ENCODE measurements at regions of chr18 and their contacts with region 1.

Region 1: GRCh38 chr18:48842259-48843061 is 108.3 kb downstream of the SMAD7 start:
- DNase-seq: peak in 4 of 5 donors; percentile 50 to 66 (median 59)
- ATAC-seq: peak; percentile 43 to 80 (median 62)
- H3K4me3 ChIP-seq: no peak overlapping the region
- H3K27ac ChIP-seq: peak overlapping the region; percentile 49 to 98 (median 84)
- H3K4me1 ChIP-seq: peaks cover 6 to 73% (median 53%) of the 10 kb centered on the region in 12 donors
- H3K27me3 ChIP-seq: no peaks in the 10 kb centered on the region
- CTCF ChIP-seq: no peak
- POLR2A ChIP-seq: no peak

Region 2: DNA sequence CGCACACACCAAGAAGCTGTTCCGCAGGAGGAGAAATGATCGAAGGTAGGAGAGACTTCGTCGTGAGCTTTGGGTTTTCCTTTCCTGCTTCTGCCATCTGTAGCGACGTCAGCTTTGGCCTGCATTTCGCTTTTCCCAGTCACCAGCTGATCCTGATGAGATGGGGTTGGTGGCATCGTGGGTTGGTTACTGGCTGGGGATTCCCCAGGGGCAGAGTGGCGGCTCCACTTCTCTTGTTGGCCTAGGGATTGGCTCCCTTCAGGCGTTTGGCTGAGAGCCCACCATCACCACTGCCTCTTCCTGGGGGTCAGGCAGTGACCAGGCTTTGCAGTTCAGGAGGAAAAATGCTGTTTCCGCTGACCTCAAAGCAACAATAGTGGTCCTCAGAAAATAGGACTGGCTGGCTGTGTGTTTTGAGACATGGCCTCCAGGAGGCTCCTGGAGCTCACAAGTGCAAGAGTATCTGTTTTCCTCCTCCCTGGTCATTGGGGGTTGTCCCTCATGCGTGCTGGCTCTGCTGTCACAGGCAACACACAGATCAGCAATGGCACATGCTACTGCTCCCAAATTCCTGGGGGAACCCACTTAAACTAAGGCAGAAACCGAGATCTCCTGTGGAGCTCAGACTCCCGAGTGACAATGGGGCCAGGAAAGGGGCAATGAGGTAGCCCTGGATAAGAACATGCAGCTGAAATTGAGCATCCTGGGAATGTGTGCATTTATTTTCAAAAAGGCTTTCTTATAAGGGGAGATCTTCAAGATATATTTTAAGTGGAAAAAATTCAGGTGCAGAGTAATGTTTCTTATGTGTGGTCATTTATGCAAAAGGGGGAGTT is 130.6 kb before region 1 on chr18:
- intact Hi-C with region 1: loop called in 1 of 10 experiments (anchors 10 kb)
- DNase-seq: peak; percentile 44 to 67 (median 59)
- ATAC-seq: peak in 3 of 4 donors; percentile 53 to 61 (median 60)
- H3K4me3 ChIP-seq: no peak overlapping the region
- H3K27ac ChIP-seq: peak overlapping the region in 7 of 12 donors; percentile 16 to 93 (median 64)
- H3K4me1 ChIP-seq: peaks cover 2 to 86% (median 49%) of the 10 kb centered on the region in 12 donors
- H3K27me3 ChIP-seq: no peaks in the 10 kb centered on the region
- CTCF ChIP-seq: peak; percentile 30 to 75 (median 60)
- POLR2A ChIP-seq: no peak

Region 3: GRCh38 chr18:48727681-48728080 is 114.8 kb before region 1 on chr18:
- intact Hi-C with region 1: no loop called
- DNase-seq: no peak
- ATAC-seq: peak; percentile 15 to 75 (median 56)
- H3K4me3 ChIP-seq: no peak overlapping the region
- H3K27ac ChIP-seq: peak overlapping the region in 8 of 12 donors; percentile 13 to 79 (median 47)
- H3K4me1 ChIP-seq: peaks cover 0 to 28% (median 15%) of the 10 kb centered on the region in 12 donors
- H3K27me3 ChIP-seq: no peaks in the 10 kb centered on the region
- CTCF ChIP-seq: no peak
- POLR2A ChIP-seq: no peak

Region 4: DNA sequence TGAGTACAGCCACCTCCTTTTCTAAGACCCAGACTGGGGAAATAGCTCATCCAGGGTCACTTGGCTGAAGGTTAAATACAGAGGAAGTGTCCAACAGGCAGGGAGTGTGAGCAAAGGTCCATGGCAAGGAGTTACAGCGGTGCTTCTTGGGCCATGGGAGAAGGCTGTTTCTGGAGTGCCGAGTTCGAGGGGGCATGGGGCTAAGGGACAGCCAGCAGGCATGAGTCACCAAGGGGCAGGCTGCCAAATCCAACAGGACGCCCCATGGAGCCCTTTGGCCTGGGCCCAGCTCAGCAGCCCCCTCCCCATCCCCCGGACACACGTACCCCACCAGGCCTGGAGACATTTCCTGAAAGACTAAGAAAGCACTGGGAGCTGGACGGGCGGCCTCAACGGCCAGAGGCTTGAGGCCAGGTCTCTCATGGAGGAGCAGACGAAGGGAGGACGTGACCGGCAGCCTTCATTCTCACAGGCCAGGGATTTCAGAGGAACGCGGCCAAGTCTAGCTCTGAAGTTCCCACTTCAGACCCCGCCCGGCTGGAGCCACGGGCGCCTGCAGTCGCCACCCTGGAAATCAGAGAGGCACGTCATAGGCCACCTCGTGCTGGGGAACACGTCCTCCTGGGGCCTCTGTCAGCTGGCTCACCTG is 52.1 kb before region 1 on chr18:
- intact Hi-C with region 1: loop called in 3 of 10 experiments (anchors 1 to 10 kb)
- DNase-seq: peak; percentile 89 to 94 (median 91)
- ATAC-seq: peak; percentile 81 to 85 (median 82)
- H3K4me3 ChIP-seq: no peak overlapping the region
- H3K27ac ChIP-seq: peak overlapping the region; percentile 75 to 96 (median 86)
- H3K4me1 ChIP-seq: peaks cover 5 to 78% (median 53%) of the 10 kb centered on the region in 12 donors
- H3K27me3 ChIP-seq: no peaks in the 10 kb centered on the region
- CTCF ChIP-seq: no peak
- POLR2A ChIP-seq: no peak

Region 5: GRCh38 chr18:48889115-48889941 is 46.9 kb after region 1 on chr18:
- intact Hi-C with region 1: loop called in 1 of 10 experiments (anchors 5 kb)
- DNase-seq: peak in 3 of 5 donors; percentile 61 to 67 (median 65)
- ATAC-seq: peak in 3 of 4 donors; percentile 41 to 64 (median 53)
- H3K4me3 ChIP-seq: no peak overlapping the region
- H3K27ac ChIP-seq: peak overlapping the region in 1 of 12 donors; percentile 19
- H3K4me1 ChIP-seq: peaks cover 0 to 40% (median 19%) of the 10 kb centered on the region in 12 donors
- H3K27me3 ChIP-seq: no peaks in the 10 kb centered on the region
- CTCF ChIP-seq: no peak
- POLR2A ChIP-seq: no peak

Region 6: GRCh38 chr18:48934723-48935432 is 92.4 kb after region 1 on chr18:
- intact Hi-C with region 1: loop called in 2 of 10 experiments (anchors 5 to 10 kb)
- DNase-seq: peak; percentile 84 to 91 (median 86)
- ATAC-seq: peak; percentile 75 to 85 (median 80)
- H3K4me3 ChIP-seq: peak overlapping the region in 10 of 12 donors; percentile 11 to 48 (median 34)
- H3K27ac ChIP-seq: peak overlapping the region; percentile 17 to 96 (median 86)
- H3K4me1 ChIP-seq: peaks cover 34 to 98% (median 93%) of the 10 kb centered on the region in 12 donors
- H3K27me3 ChIP-seq: no peaks in the 10 kb centered on the region
- CTCF ChIP-seq: no peak
- POLR2A ChIP-seq: no peak